ENCODE measurements at regions of chr14 and their contacts with region 1.

Region 1: GRCh38 chr14:93115069-93115820 is 480 bp downstream of the ITPK1 start:
- DNase-seq: peak; percentile 39 to 95 (median 89)

Region 2: DNA sequence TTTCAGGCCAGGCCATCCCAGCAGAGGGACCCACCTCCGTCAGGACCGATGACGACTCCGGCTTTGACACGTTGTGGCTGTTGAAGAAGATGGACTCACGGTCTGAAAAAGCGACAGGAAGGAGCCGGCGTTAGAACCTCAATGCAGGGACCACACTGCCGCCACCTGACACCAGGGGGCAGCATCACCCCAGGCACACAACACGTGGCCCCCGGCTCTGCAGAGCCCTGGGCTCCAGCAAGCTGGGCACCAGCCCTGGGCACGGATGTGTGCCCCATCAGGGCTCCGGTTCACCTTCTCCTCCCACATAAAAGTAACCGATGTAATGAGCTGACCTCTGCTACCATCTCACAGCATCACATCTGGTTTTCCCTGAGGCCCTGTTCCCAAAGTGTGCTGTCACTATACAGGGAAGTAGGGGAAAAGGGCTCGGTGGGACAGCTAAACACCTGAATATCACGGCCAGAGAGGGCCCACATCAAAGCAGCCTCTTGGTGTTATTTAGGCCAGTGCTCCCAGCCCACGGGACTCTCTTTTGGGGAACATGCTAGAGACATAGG is 163.3 kb before region 1 on chr14:
- intact Hi-C with region 1: loop called (anchors 5 kb)
- DNase-seq: peak; percentile 70 to 97 (median 90)

Region 3: GRCh38 chr14:92973261-92973797 is 141.9 kb before region 1 on chr14:
- intact Hi-C with region 1: loop called (anchors 5 kb)
- DNase-seq: peak; percentile 38 to 97 (median 86)

Region 4: DNA sequence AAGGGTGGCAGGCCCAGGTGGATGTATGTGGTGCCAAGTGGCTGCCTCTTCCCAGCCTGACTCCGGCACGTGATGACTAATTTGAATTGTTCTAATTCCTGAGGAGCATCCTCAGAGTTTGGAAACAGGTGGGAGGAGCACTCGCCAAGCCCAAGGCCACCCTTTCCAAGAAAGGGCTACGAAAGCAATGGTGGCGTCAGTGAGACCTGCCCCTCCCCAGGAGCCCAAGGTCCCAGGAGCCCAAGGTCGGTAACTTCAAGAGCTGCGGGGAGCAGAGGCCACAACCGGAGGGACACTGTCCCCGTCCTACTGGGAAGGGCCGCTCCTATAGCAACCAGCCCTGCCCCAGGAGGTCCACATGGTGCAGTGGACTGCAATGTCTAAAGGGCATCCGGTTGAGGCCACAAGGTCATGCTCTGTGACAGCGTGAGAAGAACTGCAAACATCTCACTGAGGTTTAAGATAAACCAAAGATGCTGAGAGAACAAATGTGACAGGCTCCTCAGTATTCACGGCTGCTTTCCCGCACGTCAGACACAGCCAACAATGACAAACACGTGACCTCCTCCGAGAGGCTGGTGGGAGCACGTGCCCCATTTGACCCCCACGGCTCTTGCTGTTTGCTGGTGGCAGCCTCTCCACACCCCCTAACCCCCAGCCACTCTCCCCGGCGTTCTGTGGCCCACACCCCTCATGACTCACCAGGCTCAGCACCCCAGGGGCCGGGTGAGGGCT is 79.2 kb before region 1 on chr14:
- intact Hi-C with region 1: loop called (anchors 5 kb)
- DNase-seq: peak; percentile 85 to 98 (median 93)